B cell (primary cell): ENCODE measurements at regions of chr6 and their contacts with region 1.

Region 1: GRCh38 chr6:143450453-143451371 is at the starts of genes ADAT2 and PEX3:
- DNase-seq: peak; percentile 96
- ATAC-seq: peak; percentile 95
- H3K4me3 ChIP-seq: peak within 1 kb of the TSS; percentile 69 to 95 (median 87)
- H3K4me3 Mint-ChIP-seq: peak within 1 kb of the TSS; percentile 95
- H3K27ac ChIP-seq: peak within 1 kb of the TSS; percentile 59 to 82
- H3K27ac Mint-ChIP-seq: peak within 1 kb of the TSS; percentile 94
- H3K4me1 ChIP-seq: peaks cover 15 to 18% of the 10 kb centered on the region in 2 donors
- H3K4me1 Mint-ChIP-seq: peaks cover 33% of the 10 kb centered on the region
- H3K27me3 ChIP-seq: no peaks in the 10 kb centered on the region
- H3K27me3 Mint-ChIP-seq: no peaks in the 10 kb centered on the region
- CTCF ChIP-seq: no peak
- total RNA-seq, gene ADAT2: 15.2 and 16.0 TPM in 2 replicates
- total RNA-seq, gene PEX3: 23.2 and 31.1 TPM in 2 replicates

Region 2: DNA sequence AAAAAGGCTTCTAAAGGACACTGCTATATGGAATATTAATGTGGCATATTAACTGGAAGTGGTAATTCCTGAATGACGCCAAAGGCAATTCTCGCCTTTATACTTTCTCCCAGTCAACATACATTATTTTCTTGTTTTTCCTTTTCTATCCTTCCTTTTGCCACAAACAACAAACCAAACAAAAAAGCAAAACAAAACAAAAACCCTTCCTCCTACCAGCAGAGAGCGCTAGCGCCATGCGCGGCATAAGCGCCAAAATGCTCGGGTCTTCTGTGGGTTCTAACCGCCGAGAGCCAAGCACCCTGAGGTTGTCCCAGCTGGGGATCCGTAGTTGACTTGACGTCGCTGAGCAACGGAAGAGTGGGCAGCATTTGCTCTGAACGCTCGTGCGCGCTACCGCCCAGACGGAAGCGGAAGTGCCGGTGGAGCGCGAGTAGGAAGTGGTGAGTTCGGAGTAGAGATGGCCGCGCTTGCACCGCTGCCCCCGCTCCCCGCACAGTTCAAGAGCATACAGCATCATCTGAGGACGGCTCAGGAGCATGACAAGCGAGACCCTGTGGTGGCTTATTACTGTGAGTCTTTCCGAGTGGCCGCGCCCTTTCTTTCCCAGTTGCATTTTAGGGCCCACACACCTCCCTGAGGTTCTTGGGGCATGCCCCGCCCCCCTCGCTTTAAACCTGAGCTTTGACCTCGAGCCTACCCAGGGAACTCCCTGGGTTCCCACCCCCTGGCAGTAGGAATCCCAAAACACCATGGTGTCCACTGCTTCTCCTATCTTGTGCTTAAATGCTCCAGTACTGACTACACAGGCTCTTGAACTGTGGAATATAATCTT is 1303.7 kb before region 1 on chr6 and contains the starts of genes NMBR and VTA1:
- CTCF ChIA-PET with region 1: interaction called, 3 read pairs
- POLR2A ChIA-PET with region 1: no interaction called
- intact Hi-C with region 1: loop called (anchors 1 kb)
- DNase-seq: peak; percentile 99
- ATAC-seq: peak; percentile 98
- H3K4me3 ChIP-seq: peak within 1 kb of the TSS; percentile 84 to 97 (median 94)
- H3K4me3 Mint-ChIP-seq: peak within 1 kb of the TSS; percentile 88
- H3K27ac ChIP-seq: peak within 1 kb of the TSS; percentile 60 to 69
- H3K27ac Mint-ChIP-seq: peak within 1 kb of the TSS; percentile 81
- H3K4me1 ChIP-seq: peaks cover 21 to 24% of the 10 kb centered on the region in 2 donors
- H3K4me1 Mint-ChIP-seq: peaks cover 55% of the 10 kb centered on the region
- H3K27me3 ChIP-seq: peaks cover 0 to 3% (median 0%) of the 10 kb centered on the region in 4 experiments
- H3K27me3 Mint-ChIP-seq: peaks cover 3% of the 10 kb centered on the region
- CTCF ChIP-seq: peak; percentile 96
- total RNA-seq, gene NMBR: not detected in 2 replicates
- total RNA-seq, gene VTA1: 26.2 and 27.9 TPM in 2 replicates

Region 3: GRCh38 chr6:143060354-143060805 is 390.3 kb before region 1 on chr6:
- CTCF ChIA-PET with region 1: no interaction called
- POLR2A ChIA-PET with region 1: no interaction called
- intact Hi-C with region 1: loop called (anchors 2 kb)
- DNase-seq: peak; percentile 90
- ATAC-seq: peak; percentile 66
- H3K4me3 ChIP-seq: peak overlapping the region; percentile 71 to 88 (median 81)
- H3K4me3 Mint-ChIP-seq: peak overlapping the region; percentile 97
- H3K27ac ChIP-seq: peak overlapping the region; percentile 69 to 80
- H3K27ac Mint-ChIP-seq: peak overlapping the region; percentile 92
- H3K4me1 ChIP-seq: peaks cover 13 to 16% of the 10 kb centered on the region in 2 donors
- H3K4me1 Mint-ChIP-seq: peaks cover 24% of the 10 kb centered on the region
- H3K27me3 ChIP-seq: no peaks in the 10 kb centered on the region
- H3K27me3 Mint-ChIP-seq: peaks cover 3% of the 10 kb centered on the region
- CTCF ChIP-seq: peak; percentile 40

Region 4: GRCh38 chr6:143501851-143502250 is 51.1 kb after region 1 on chr6:
- CTCF ChIA-PET with region 1: no interaction called
- POLR2A ChIA-PET with region 1: no interaction called
- intact Hi-C with region 1: no loop called
- DNase-seq: no peak
- ATAC-seq: no peak
- H3K4me3 ChIP-seq: no peak overlapping the region
- H3K4me3 Mint-ChIP-seq: no peak overlapping the region
- H3K27ac ChIP-seq: no peak overlapping the region
- H3K27ac Mint-ChIP-seq: no peak overlapping the region
- H3K4me1 ChIP-seq: no peaks in the 10 kb centered on the region
- H3K4me1 Mint-ChIP-seq: no peaks in the 10 kb centered on the region
- H3K27me3 ChIP-seq: no peaks in the 10 kb centered on the region
- H3K27me3 Mint-ChIP-seq: no peaks in the 10 kb centered on the region
- CTCF ChIP-seq: no peak

Region 5: DNA sequence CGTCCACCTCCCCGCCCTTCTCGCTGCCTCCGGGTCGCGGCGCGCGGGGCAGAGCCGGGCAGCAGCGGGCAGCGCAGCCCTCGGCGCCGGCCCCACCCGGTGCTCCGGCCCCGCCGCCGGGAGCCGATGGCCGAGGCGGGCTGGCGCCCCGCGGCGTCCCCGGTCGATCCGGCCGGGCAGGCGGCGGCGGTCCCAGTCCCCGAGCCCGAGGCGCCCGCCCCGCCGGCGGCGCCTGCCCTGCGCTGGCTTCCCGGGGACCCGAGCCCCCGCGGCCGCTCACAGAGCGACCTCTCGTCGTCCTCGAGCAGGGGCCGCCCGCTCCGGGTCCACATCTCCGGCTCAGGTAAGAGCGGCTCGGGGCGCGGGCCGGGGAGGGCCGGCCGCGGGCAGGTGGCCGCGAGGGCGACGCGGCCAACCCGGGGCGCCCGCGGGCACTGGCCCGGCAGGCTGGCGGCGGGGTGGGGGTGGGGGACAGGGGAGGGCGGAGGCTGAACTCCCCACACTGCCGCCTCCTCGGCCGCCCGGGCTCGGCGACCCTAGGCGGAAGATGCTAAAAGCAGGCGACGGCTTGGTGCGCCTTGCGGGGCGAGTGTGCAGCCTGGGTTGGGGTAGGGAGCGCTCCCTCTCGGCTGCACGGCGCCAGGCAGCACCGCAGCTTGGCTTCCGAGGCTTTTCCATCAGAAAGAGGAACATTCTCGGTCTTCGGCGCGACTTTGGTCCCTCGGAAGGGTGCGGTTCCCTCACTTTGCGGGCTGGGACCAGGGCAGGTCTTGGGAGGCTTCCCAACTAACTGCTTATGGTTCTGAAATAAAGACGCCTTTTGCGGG is 86.4 kb after region 1 on chr6:
- CTCF ChIA-PET with region 1: interaction called, 3 read pairs
- POLR2A ChIA-PET with region 1: no interaction called
- intact Hi-C with region 1: loop called (anchors 1 kb)
- DNase-seq: peak; percentile 75
- ATAC-seq: peak; percentile 65
- H3K4me3 ChIP-seq: peak overlapping the region; percentile 28 to 67 (median 56)
- H3K4me3 Mint-ChIP-seq: peak overlapping the region; percentile 86
- H3K27ac ChIP-seq: no peak overlapping the region
- H3K27ac Mint-ChIP-seq: peak overlapping the region; percentile 78
- H3K4me1 ChIP-seq: peaks cover 22 to 31% of the 10 kb centered on the region in 2 donors
- H3K4me1 Mint-ChIP-seq: peaks cover 29% of the 10 kb centered on the region
- H3K27me3 ChIP-seq: no peaks in the 10 kb centered on the region
- H3K27me3 Mint-ChIP-seq: no peaks in the 10 kb centered on the region
- CTCF ChIP-seq: peak; percentile 22

Region 6: GRCh38 chr6:144095331-144096002 is 644.8 kb after region 1 on chr6 and contains the start of gene SF3B5:
- CTCF ChIA-PET with region 1: no interaction called
- POLR2A ChIA-PET with region 1: no interaction called
- intact Hi-C with region 1: loop called (anchors 1 kb)
- DNase-seq: peak; percentile 99
- ATAC-seq: peak; percentile 97
- H3K4me3 ChIP-seq: peak within 1 kb of the TSS; percentile 63 to 98 (median 73)
- H3K4me3 Mint-ChIP-seq: peak within 1 kb of the TSS; percentile 100
- H3K27ac ChIP-seq: peak within 1 kb of the TSS; percentile 77 to 84
- H3K27ac Mint-ChIP-seq: peak within 1 kb of the TSS; percentile 100
- H3K4me1 ChIP-seq: peaks cover 16 to 22% of the 10 kb centered on the region in 2 donors
- H3K4me1 Mint-ChIP-seq: peaks cover 23% of the 10 kb centered on the region
- H3K27me3 ChIP-seq: no peaks in the 10 kb centered on the region
- H3K27me3 Mint-ChIP-seq: no peaks in the 10 kb centered on the region
- CTCF ChIP-seq: no peak
- total RNA-seq, gene SF3B5: 104 and 111 TPM in 2 replicates

Region 7: GRCh38 chr6:144158133-144158532 is 707.4 kb after region 1 on chr6:
- CTCF ChIA-PET with region 1: no interaction called
- POLR2A ChIA-PET with region 1: no interaction called
- intact Hi-C with region 1: no loop called
- DNase-seq: no peak
- ATAC-seq: no peak
- H3K4me3 ChIP-seq: no peak overlapping the region
- H3K4me3 Mint-ChIP-seq: no peak overlapping the region
- H3K27ac ChIP-seq: no peak overlapping the region
- H3K27ac Mint-ChIP-seq: no peak overlapping the region
- H3K4me1 ChIP-seq: peaks cover 11 to 13% of the 10 kb centered on the region in 2 donors
- H3K4me1 Mint-ChIP-seq: peaks cover 43% of the 10 kb centered on the region
- H3K27me3 ChIP-seq: no peaks in the 10 kb centered on the region
- H3K27me3 Mint-ChIP-seq: no peaks in the 10 kb centered on the region
- CTCF ChIP-seq: no peak